Naive thymus-derived CD4-positive, alpha-beta T cell (primary cell): ENCODE measurements at regions of chr7 and their contacts with region 1.

Region 1: DNA sequence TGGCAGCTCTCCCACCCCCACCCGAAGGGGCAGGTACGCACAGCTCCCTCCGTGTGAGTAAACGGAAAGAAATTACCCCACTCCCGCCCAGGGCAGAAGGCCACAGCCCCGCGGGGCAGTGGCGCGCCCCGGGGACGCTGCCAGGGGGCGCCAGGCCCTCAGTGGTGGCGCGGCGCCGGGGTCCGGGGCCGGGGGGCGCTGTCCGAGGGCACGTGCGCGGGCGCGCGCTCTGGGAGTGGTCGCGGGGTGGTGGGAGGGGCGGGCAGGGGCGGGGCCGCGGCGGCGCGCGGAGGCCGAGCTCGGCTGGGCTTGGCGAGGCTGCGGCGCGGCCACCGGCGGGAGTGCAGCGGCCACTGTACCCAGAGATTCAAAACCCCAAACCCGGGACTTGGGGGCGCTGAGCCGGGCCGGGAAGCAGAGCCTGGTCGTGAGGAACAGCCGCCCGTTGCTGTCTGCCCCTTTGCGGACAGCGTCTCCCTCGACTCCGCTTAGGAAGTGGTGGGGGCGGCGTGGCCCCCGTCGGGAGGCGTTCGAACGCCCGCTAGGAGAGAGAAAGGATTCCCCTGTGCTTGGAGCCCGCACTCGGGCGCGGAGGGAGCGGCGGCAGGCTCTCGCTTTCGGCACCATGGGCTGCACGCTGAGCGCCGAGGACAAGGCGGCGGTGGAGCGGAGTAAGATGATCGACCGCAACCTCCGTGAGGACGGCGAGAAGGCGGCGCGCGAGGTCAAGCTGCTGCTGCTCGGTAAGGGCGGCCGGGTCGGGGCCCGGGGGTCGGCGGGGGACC is at the start of gene GNAI1:
- DNase-seq: peak in 8 of 9 donors; percentile 12 to 44 (median 28)
- ATAC-seq: peak; percentile 58
- H3K4me3 ChIP-seq: peak within 1 kb of the TSS; percentile 30
- H3K4me3 Mint-ChIP-seq: peak within 1 kb of the TSS; percentile 74 to 94 (median 87)
- H3K27ac ChIP-seq: peak within 1 kb of the TSS; percentile 58
- H3K27ac Mint-ChIP-seq: peak within 1 kb of the TSS in 8 of 9 donors; percentile 34 to 90 (median 83)
- H3K4me1 ChIP-seq: peaks cover 0 to 6% of the 10 kb centered on the region in 2 donors
- H3K4me1 Mint-ChIP-seq: peaks cover 12 to 45% (median 37%) of the 10 kb centered on the region in 7 donors
- H3K27me3 ChIP-seq: no peaks in the 10 kb centered on the region
- H3K27me3 Mint-ChIP-seq: peaks cover 25 to 63% (median 30%) of the 10 kb centered on the region in 5 donors
- total RNA-seq, gene GNAI1: 0.60 to 3.4 (median 2.4) TPM

Region 2: GRCh38 chr7:80060218-80060806 is 74.4 kb before region 1 on chr7:
- CTCF ChIA-PET with region 1: no interaction called
- POLR2A ChIA-PET with region 1: no interaction called
- intact Hi-C with region 1: loop called in 1 of 2 experiments (anchors 2 kb)
- DNase-seq: peak in 5 of 9 donors; percentile 13 to 40 (median 22)
- ATAC-seq: no peak
- H3K4me3 ChIP-seq: no peak overlapping the region
- H3K4me3 Mint-ChIP-seq: no peak overlapping the region
- H3K27ac ChIP-seq: no peak overlapping the region
- H3K27ac Mint-ChIP-seq: no peak overlapping the region
- H3K4me1 ChIP-seq: no peaks in the 10 kb centered on the region
- H3K4me1 Mint-ChIP-seq: no peaks in the 10 kb centered on the region
- H3K27me3 ChIP-seq: no peaks in the 10 kb centered on the region
- H3K27me3 Mint-ChIP-seq: no peaks in the 10 kb centered on the region

Region 3: GRCh38 chr7:80107278-80107677 is 27.4 kb before region 1 on chr7:
- CTCF ChIA-PET with region 1: interaction called, 3 read pairs
- POLR2A ChIA-PET with region 1: interaction called, 4 read pairs
- intact Hi-C with region 1: loop called in 1 of 2 experiments (anchors 2 kb)
- DNase-seq: peak in 6 of 9 donors; percentile 25 to 55 (median 34)
- ATAC-seq: peak; percentile 69
- H3K4me3 ChIP-seq: no peak overlapping the region
- H3K4me3 Mint-ChIP-seq: peak overlapping the region in 9 of 10 donors; percentile 17 to 60 (median 42)
- H3K27ac ChIP-seq: no peak overlapping the region
- H3K27ac Mint-ChIP-seq: peak overlapping the region in 7 of 9 donors; percentile 3 to 82 (median 65)
- H3K4me1 ChIP-seq: peaks cover 0 to 18% of the 10 kb centered on the region in 2 donors
- H3K4me1 Mint-ChIP-seq: peaks cover 6 to 32% (median 25%) of the 10 kb centered on the region in 7 donors
- H3K27me3 ChIP-seq: no peaks in the 10 kb centered on the region
- H3K27me3 Mint-ChIP-seq: peaks cover 0 to 2% (median 0%) of the 10 kb centered on the region in 5 donors

Region 4: DNA sequence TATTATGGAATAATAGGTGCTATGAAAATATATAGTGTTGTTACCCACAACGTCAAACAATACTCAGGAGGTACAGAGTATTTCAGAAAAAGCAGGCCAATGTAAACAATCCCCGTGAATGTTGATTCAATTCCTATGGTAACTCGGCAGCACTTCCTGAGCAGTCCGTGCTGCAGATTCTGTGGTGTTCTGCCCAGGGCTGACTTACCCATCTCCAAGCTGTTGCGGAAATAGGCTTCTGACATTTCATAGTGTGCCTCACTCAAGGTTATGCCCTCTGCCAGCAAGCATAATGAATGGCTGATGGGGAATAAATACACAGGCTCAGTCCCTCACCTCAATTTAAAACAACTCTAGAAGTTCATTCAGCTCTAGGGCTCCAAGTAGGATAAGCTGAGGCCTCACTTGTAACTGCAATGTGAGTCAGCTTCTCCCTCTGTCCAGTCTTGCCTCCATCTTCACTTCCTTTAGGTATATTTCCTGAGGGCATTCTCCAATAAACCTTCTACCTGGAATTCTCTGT is 177.5 kb after region 1 on chr7:
- CTCF ChIA-PET with region 1: no interaction called
- POLR2A ChIA-PET with region 1: no interaction called
- intact Hi-C with region 1: loop called in 1 of 2 experiments (anchors 2 kb)
- DNase-seq: peak in 7 of 9 donors; percentile 34 to 69 (median 54)
- ATAC-seq: peak; percentile 82
- H3K4me3 ChIP-seq: no peak overlapping the region
- H3K4me3 Mint-ChIP-seq: peak overlapping the region in 8 of 10 donors; percentile 51 to 78 (median 60)
- H3K27ac ChIP-seq: peak overlapping the region; percentile 17
- H3K27ac Mint-ChIP-seq: peak overlapping the region in 8 of 9 donors; percentile 19 to 87 (median 52)
- H3K4me1 ChIP-seq: peaks cover 0 to 24% of the 10 kb centered on the region in 2 donors
- H3K4me1 Mint-ChIP-seq: peaks cover 0 to 41% (median 28%) of the 10 kb centered on the region in 7 donors
- H3K27me3 ChIP-seq: no peaks in the 10 kb centered on the region
- H3K27me3 Mint-ChIP-seq: no peaks in the 10 kb centered on the region

Region 5: GRCh38 chr7:80453699-80454340 is 319.1 kb after region 1 on chr7:
- CTCF ChIA-PET with region 1: no interaction called
- POLR2A ChIA-PET with region 1: no interaction called
- intact Hi-C with region 1: loop called in 1 of 2 experiments (anchors 2 kb)
- DNase-seq: peak in 1 of 9 donors; percentile 4
- ATAC-seq: no peak
- H3K4me3 ChIP-seq: no peak overlapping the region
- H3K4me3 Mint-ChIP-seq: no peak overlapping the region
- H3K27ac ChIP-seq: no peak overlapping the region
- H3K27ac Mint-ChIP-seq: no peak overlapping the region
- H3K4me1 ChIP-seq: no peaks in the 10 kb centered on the region
- H3K4me1 Mint-ChIP-seq: no peaks in the 10 kb centered on the region
- H3K27me3 ChIP-seq: no peaks in the 10 kb centered on the region
- H3K27me3 Mint-ChIP-seq: no peaks in the 10 kb centered on the region